HepG2 (cell line): ENCODE measurements at regions of chrX and their contacts with region 1.

Region 1: GRCh38 chrX:115393271-115393670 is 103.8 kb downstream of the LUZP4 start:
- DNase-seq: peak; percentile 46
- ATAC-seq: peak; percentile 67
- H3K4me3 ChIP-seq: no peak overlapping the region
- H3K27ac ChIP-seq: no peak overlapping the region
- H3K4me1 ChIP-seq: peaks cover 38% of the 10 kb centered on the region
- H3K27me3 ChIP-seq: no peaks in the 10 kb centered on the region
- CTCF ChIP-seq: no peak
- EP300 ChIP-seq: no peak
- POLR2A ChIP-seq: no peak
- RAD21 ChIP-seq: no peak

Region 2: GRCh38 chrX:115350711-115351381 is 42.4 kb before region 1 on chrX:
- CTCF ChIA-PET with region 1: no interaction called
- POLR2A ChIA-PET with region 1: no interaction called
- in situ Hi-C with region 1: no loop called
- intact Hi-C with region 1: no loop called
- DNase-seq: no peak
- ATAC-seq: no peak
- H3K4me3 ChIP-seq: no peak overlapping the region
- H3K27ac ChIP-seq: no peak overlapping the region
- H3K4me1 ChIP-seq: peaks cover 32% of the 10 kb centered on the region
- H3K27me3 ChIP-seq: no peaks in the 10 kb centered on the region
- CTCF ChIP-seq: no peak
- EP300 ChIP-seq: no peak
- POLR2A ChIP-seq: no peak
- RAD21 ChIP-seq: no peak

Region 3: GRCh38 chrX:115427861-115428410 is 34.7 kb after region 1 on chrX:
- CTCF ChIA-PET with region 1: no interaction called
- POLR2A ChIA-PET with region 1: no interaction called
- in situ Hi-C with region 1: no loop called
- intact Hi-C with region 1: no loop called
- DNase-seq: no peak
- ATAC-seq: no peak
- H3K4me3 ChIP-seq: no peak overlapping the region
- H3K27ac ChIP-seq: no peak overlapping the region
- H3K4me1 ChIP-seq: no peaks in the 10 kb centered on the region
- H3K27me3 ChIP-seq: no peaks in the 10 kb centered on the region
- CTCF ChIP-seq: no peak
- EP300 ChIP-seq: no peak
- POLR2A ChIP-seq: no peak
- RAD21 ChIP-seq: no peak

Region 4: DNA sequence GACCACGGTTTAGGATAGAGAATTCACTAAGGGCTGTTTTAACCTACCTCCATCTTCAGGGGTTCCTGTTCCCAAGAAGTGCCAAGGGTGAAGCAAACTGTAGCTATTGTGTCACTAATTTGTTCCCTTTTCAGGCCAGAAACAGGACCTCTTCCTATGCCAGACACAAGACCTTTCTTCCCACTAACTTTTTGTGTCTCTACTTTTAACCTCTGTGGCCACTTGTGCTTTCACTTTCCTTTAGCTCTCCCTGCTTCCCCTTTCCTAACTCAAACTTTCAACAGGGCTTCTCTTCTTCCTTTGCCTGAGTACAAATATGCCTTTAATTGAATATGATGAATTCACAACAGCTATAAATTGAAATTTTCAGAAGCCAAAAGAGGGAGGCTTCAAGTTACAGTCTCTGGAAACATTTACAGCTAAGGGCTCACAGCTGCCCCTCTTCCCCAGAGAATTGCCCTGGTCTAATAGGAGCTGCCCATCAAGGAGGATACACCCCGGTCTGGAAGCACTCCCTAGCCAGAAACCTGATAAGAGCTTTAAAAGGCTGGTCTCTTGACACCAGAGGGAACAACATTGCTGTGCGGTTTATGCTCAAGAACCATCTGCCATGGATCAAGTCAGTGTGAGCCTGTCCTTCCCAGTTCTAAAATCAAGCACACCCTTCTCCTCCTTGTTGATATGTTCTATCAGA is 106.0 kb after region 1 on chrX:
- CTCF ChIA-PET with region 1: no interaction called
- POLR2A ChIA-PET with region 1: no interaction called
- in situ Hi-C with region 1: no loop called
- intact Hi-C with region 1: loop called (anchors 10 kb)
- DNase-seq: no peak
- ATAC-seq: no peak
- H3K4me3 ChIP-seq: no peak overlapping the region
- H3K27ac ChIP-seq: no peak overlapping the region
- H3K4me1 ChIP-seq: no peaks in the 10 kb centered on the region
- H3K27me3 ChIP-seq: no peaks in the 10 kb centered on the region
- CTCF ChIP-seq: no peak
- EP300 ChIP-seq: no peak
- POLR2A ChIP-seq: no peak
- RAD21 ChIP-seq: no peak

Region 5: DNA sequence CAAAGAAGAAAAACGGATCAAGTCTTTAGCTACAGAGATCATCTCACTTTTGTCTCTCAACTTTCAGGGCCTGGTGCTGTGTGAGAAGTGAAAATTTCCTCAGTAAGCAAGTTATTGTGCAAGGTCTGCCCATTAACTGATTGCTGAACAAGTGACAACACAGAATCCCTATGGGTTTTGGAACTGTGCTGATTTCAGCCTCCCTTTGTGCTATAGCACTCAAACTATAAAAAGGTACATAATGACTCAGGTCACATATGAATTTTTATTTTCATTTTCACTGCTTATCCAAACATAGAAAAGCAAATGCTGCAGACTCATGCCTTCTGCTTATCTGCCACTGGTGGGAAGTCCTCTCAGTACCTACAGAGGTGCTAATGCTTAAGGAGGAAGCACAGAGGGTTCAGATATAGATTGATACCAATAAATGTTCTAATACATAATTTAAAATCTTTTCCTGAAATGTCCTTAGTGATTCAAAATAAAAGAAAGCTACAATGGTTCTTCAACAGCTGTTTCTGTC is 1645.7 kb after region 1 on chrX:
- CTCF ChIA-PET with region 1: no interaction called
- POLR2A ChIA-PET with region 1: no interaction called
- in situ Hi-C with region 1: no loop called
- intact Hi-C with region 1: loop called (anchors 10 kb)
- DNase-seq: no peak
- ATAC-seq: no peak
- H3K4me3 ChIP-seq: no peak overlapping the region
- H3K27ac ChIP-seq: no peak overlapping the region
- H3K4me1 ChIP-seq: no peaks in the 10 kb centered on the region
- H3K27me3 ChIP-seq: no peaks in the 10 kb centered on the region
- CTCF ChIP-seq: no peak
- EP300 ChIP-seq: no peak
- POLR2A ChIP-seq: no peak
- RAD21 ChIP-seq: no peak